Caco-2 (cell line): ENCODE measurements at regions of chr2 and their contacts with region 1.

Region 1: DNA sequence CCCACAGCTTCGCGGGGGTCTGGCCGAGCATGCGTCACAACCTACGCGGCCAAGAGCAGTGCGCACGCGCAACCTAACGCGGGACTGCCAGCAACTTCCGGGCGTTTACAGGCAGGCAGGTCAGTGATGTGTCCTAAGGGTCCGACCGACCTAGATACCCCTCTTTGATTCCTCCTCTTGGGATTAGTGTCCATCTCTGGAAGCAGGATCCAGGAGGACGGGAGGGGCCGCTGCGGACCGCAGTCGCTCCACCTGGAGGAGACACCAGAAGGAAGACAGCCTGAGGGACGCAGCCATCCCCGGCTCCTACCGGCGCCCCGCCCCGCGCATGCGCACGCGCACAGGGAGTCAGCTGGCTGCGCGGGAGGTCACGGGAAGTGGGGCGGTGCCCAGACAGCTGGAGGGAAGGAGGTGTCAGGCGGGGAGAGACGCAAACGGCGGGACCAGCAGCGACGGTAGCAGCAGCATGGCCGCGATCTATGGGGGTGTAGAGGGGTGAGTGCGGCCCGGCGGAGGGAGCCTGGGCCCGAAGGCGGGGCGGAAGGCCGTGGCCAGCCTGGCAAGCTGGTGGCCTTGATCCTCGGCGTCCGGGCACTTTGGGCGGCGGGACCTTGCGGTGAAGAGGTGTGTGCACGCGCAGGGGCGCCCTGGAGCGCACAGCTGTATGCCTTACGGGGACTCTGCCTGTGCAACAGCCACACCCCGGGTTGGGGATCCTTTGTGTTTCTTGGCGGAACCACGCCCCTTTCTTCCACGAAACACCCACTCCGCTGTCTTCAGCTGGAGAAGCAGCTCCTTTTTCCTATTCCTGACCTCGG is at the start of gene NAGK:
- DNase-seq: peak; percentile 96 to 98
- H3K4me3 ChIP-seq: peak within 1 kb of the TSS; percentile 71
- H3K4me3 Mint-ChIP-seq: peak within 1 kb of the TSS; percentile 76
- H3K27ac Mint-ChIP-seq: peak within 1 kb of the TSS; percentile 51
- H3K4me1 ChIP-seq: 0 out of 2 replicates have a peak, but pooled peaks cover 4% of the 10 kb centered on the region
- H3K4me1 Mint-ChIP-seq: peaks cover 10% of the 10 kb centered on the region
- H3K27me3 ChIP-seq: no peaks in the 10 kb centered on the region
- H3K27me3 Mint-ChIP-seq: no peaks in the 10 kb centered on the region
- CTCF ChIP-seq: no peak
- total RNA-seq, gene NAGK: 87.6 and 101 TPM in 2 replicates

Region 2: DNA sequence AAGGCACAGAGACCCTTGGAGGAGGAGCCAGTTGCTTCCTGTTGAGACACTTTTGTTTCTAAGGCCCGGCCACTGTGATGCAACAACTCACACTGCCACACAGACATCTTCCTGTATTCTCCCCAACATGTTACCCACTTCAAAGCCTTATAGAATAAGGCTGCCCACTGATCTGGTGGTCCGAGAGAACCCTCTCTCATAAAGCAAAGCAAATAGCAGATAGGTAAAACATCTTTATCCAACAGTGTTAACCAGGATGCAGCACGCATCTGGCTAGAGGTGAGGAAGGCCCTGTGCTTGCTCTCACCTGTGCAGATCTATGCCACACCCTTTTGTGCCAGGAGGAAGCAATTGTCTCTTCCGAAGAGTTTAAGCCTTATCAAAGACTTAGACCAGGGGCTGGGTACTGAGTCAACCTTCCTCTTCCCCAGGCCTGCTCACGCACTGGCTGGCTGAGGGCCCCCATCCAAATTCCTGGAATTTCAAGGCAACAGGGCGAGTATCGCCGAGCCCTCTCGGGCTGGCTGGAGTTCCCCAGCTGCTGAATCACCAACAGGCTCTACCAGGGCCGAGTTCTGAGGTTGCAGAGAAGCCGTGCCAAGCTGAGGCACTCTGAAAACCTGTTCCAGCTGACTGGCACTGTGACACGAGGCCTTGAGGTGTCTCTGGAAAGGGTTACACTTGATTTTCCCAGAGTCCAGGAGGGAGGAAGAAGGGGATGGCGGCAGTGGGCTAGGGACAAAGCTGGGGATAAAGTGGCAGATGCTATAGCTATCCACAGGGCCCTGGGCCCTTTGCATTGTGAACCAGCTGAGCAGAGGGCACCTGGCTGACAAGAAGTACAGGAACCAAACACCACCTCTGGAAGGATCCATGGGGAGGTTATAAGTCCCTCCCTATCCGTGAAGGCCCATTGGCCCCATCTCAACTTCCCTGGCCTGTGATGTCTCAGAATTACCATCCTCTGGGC is 544.1 kb before region 1 on chr2:
- CTCF ChIA-PET with region 1: no interaction called
- POLR2A ChIA-PET with region 1: interaction called, 12 read pairs
- intact Hi-C with region 1: no loop called
- DNase-seq: no peak
- H3K4me3 ChIP-seq: no peak overlapping the region
- H3K4me3 Mint-ChIP-seq: no peak overlapping the region
- H3K27ac Mint-ChIP-seq: no peak overlapping the region
- H3K4me1 ChIP-seq: no peaks in the 10 kb centered on the region
- H3K4me1 Mint-ChIP-seq: peaks cover 5% of the 10 kb centered on the region
- H3K27me3 ChIP-seq: no peaks in the 10 kb centered on the region
- H3K27me3 Mint-ChIP-seq: no peaks in the 10 kb centered on the region
- CTCF ChIP-seq: no peak

Region 3: DNA sequence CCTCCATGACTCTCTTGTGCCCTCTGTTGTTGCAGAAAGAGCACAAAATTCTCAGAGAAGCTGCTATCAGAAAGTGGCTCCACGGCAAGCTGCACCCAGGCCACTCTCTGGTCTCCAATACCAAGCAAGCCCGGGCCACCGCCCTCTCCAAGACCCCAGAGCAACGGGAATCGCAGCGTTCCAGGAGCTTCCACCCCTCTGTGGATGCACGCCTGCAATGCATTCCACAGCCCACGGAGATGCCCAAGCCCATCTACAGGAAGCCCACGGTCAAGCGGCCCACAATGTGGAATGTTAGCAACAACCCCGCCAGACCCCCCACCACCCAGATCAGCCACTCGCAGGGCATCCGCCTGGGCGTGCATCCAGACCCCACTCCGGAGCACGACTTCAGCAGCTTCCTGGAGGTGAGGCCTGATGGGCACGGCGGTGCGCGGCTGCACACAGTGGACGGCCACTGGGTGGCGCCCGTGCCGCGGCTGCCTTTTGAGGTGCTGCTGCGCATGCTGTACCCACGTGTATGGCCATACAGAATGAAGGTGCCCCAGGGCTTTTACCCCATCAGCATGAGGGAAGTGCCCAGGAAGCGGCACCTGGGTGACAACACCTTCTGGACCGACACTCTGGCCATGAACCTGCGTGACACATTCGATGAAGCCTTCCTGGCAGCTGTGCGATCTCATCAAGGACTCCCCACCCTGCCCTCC is 83.7 kb before region 1 on chr2:
- CTCF ChIA-PET with region 1: no interaction called
- POLR2A ChIA-PET with region 1: no interaction called
- intact Hi-C with region 1: no loop called
- DNase-seq: peak; percentile 33 to 44
- H3K4me3 ChIP-seq: no peak overlapping the region
- H3K4me3 Mint-ChIP-seq: no peak overlapping the region
- H3K27ac Mint-ChIP-seq: no peak overlapping the region
- H3K4me1 ChIP-seq: no peaks in the 10 kb centered on the region
- H3K4me1 Mint-ChIP-seq: no peaks in the 10 kb centered on the region
- H3K27me3 ChIP-seq: no peaks in the 10 kb centered on the region
- H3K27me3 Mint-ChIP-seq: no peaks in the 10 kb centered on the region
- CTCF ChIP-seq: peak; percentile 21 to 36

Region 4: DNA sequence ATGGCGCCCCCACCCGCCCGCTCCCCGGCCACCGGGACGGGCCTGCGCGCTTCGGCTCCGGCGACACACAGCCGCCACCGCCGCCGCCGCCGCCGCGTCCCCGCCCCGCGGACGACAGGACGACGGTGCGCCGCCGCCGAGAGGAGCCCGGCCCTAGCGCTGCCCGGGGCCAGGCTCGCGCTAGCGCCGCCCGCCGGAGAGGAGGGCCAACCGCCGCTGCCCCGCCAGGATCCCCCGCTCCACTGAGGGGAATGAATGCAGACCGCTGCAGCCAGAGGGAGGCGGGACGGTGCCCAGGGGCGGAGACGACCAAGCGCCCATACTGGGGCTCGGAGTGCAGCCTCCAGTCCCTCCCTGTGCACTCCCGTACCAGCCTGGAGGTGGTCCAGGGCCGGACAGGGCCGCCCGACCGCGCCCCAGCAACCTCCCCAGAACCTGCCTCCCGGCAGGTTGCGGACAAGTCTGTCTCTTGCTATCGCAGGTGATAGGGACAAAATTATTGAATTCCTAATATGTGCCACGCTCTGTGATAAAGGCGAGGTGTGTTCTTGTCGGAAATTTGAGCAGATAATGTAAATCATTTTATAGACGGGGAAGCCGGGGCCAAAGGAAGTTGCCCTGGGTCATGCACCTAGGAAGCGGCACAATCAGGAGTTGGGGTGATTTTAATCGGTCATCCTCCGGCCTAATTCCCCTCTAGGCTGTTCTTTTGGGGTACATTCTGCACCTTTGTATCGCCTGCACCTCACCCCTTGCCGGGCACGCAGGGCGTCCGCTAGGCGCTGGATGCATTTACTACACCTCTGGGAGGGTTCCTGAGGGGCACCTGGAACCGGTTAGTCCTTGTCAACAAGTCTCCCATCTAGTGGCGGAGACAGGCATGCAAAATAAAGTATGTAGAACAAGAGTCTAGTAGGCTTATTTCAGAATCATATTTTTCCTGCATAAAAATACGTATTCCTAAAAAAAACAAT is 73.4 kb before region 1 on chr2 and contains the start of gene TEX261:
- CTCF ChIA-PET with region 1: interaction called, 5 read pairs
- POLR2A ChIA-PET with region 1: no interaction called
- intact Hi-C with region 1: loop called (anchors 2 kb)
- DNase-seq: peak; percentile 90 to 97
- H3K4me3 ChIP-seq: peak within 1 kb of the TSS; percentile 73
- H3K4me3 Mint-ChIP-seq: peak within 1 kb of the TSS; percentile 93
- H3K27ac Mint-ChIP-seq: peak within 1 kb of the TSS; percentile 61
- H3K4me1 ChIP-seq: peaks cover 19% of the 10 kb centered on the region
- H3K4me1 Mint-ChIP-seq: no peaks in the 10 kb centered on the region
- H3K27me3 ChIP-seq: no peaks in the 10 kb centered on the region
- H3K27me3 Mint-ChIP-seq: no peaks in the 10 kb centered on the region
- CTCF ChIP-seq: peak; percentile 45 to 77
- total RNA-seq, gene TEX261: 64.1 and 70.0 TPM in 2 replicates

Region 5: DNA sequence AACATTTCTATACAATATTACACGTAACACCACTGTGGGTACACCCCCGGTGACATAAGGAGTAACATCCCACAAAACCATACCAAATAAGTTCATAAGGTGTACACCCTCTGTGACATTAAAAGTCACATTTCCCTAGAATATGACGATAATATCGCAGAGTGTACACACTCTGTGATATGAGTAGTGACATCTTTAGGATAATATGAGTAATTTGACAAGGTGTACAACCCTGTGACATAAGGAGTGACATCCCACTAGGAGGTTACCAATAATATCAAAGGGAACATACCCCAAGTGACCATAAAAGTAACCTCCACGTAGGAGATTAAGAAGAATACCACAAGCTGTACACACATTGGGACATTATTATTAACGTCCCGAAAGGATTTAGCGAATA is 49.8 kb before region 1 on chr2:
- CTCF ChIA-PET with region 1: interaction called, 18 read pairs
- POLR2A ChIA-PET with region 1: no interaction called
- intact Hi-C with region 1: loop called (anchors 1 kb)
- DNase-seq: no peak
- H3K4me3 ChIP-seq: no peak overlapping the region
- H3K4me3 Mint-ChIP-seq: no peak overlapping the region
- H3K27ac Mint-ChIP-seq: no peak overlapping the region
- H3K4me1 ChIP-seq: 0 out of 2 replicates have a peak, but pooled peaks cover 4% of the 10 kb centered on the region
- H3K4me1 Mint-ChIP-seq: peaks cover 8% of the 10 kb centered on the region
- H3K27me3 ChIP-seq: no peaks in the 10 kb centered on the region
- H3K27me3 Mint-ChIP-seq: no peaks in the 10 kb centered on the region
- CTCF ChIP-seq: no peak

Region 6: DNA sequence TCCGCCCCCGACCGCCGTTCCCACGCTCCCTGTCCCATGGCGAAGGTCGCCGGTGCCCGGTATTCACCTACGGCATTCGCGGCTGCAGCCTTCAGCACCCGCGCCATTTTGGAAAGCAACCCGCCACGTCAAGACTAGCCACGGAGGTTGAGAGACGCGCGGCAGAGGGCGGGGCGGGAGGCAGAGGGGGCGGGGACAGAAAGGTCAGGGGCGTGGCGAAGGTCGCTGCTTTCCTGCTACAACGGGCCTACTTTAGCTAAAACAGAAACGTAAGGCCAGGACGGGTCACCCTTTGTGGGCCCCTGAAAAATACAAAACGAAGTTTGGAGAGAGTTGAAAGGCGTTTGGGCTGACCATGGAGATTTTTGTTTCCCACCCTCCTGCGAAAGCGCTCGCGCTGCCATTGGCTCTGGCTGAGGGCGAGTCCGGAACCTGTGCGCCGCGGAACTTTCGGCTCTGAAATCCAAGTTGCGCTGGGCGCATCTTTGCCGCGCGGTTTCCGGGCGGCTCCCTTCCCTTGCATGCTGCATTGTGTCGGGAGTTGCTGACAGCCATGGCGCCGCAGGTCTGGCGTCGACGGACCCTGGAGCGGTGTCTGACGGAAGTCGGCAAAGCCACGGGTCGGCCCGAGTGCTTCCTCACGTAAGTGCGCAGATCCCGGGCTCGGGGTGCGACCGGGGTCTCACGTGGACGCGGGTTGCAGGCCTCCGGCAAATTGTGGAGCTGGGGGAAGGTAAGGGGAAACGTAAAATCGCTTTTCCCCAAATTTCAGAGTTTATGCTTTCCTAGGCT is 61.9 kb after region 1 on chr2 and contains the starts of genes MCEE and MPHOSPH10:
- CTCF ChIA-PET with region 1: no interaction called
- POLR2A ChIA-PET with region 1: interaction called, 12 read pairs
- intact Hi-C with region 1: loop called (anchors 1 kb)
- DNase-seq: peak; percentile 93
- H3K4me3 ChIP-seq: peak within 1 kb of the TSS; percentile 73
- H3K4me3 Mint-ChIP-seq: no peak within 1 kb of the TSS
- H3K27ac Mint-ChIP-seq: no peak within 1 kb of the TSS
- H3K4me1 ChIP-seq: 0 out of 2 replicates have a peak, but pooled peaks cover 4% of the 10 kb centered on the region
- H3K4me1 Mint-ChIP-seq: no peaks in the 10 kb centered on the region
- H3K27me3 ChIP-seq: no peaks in the 10 kb centered on the region
- H3K27me3 Mint-ChIP-seq: no peaks in the 10 kb centered on the region
- CTCF ChIP-seq: no peak
- total RNA-seq, gene MCEE: 13.7 and 15.6 TPM in 2 replicates
- total RNA-seq, gene MPHOSPH10: 53.2 and 57.8 TPM in 2 replicates

Region 7: DNA sequence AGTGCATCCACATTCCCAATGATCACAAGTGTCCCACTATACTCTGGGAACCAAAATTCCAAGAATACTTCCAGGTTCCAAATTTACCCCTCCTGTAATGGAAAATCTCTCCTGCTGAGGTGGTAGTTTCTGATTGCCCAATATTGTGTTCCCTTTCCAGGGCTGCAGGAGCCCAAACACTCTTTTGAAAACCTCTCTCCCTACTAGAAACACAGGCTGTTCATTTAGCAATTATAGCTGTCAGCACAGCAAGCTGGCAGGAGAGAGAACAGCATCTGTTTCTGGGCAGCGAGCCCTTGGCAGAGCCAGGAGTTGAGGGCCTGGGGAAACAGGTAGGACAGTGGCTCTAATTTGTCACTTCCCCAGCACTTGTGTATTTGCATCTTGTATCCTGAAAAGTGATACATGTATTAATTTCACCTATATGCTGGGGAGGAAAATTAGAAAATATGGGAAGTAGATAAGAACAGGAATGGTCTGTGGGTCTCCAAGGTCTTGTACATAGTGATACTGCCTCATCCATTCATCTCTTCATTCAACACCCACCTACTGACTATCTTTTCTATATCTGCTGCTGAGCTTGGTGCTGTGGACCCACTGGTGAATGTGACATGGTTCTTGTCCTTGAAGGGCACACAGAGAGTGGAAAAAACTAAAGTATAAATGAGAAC is 175.3 kb after region 1 on chr2:
- CTCF ChIA-PET with region 1: no interaction called
- POLR2A ChIA-PET with region 1: interaction called, 10 read pairs
- intact Hi-C with region 1: no loop called
- DNase-seq: no peak
- H3K4me3 ChIP-seq: no peak overlapping the region
- H3K4me3 Mint-ChIP-seq: peak overlapping the region; percentile 25
- H3K27ac Mint-ChIP-seq: peak overlapping the region; percentile 73
- H3K4me1 ChIP-seq: peaks cover 20% of the 10 kb centered on the region
- H3K4me1 Mint-ChIP-seq: peaks cover 22% of the 10 kb centered on the region
- H3K27me3 ChIP-seq: no peaks in the 10 kb centered on the region
- H3K27me3 Mint-ChIP-seq: no peaks in the 10 kb centered on the region
- CTCF ChIP-seq: no peak

Region 8: GRCh38 chr2:71578767-71579342 is 510.4 kb after region 1 on chr2:
- CTCF ChIA-PET with region 1: no interaction called
- POLR2A ChIA-PET with region 1: no interaction called
- intact Hi-C with region 1: no loop called
- DNase-seq: no peak
- H3K4me3 ChIP-seq: no peak overlapping the region
- H3K4me3 Mint-ChIP-seq: no peak overlapping the region
- H3K27ac Mint-ChIP-seq: no peak overlapping the region
- H3K4me1 ChIP-seq: no peaks in the 10 kb centered on the region
- H3K4me1 Mint-ChIP-seq: no peaks in the 10 kb centered on the region
- H3K27me3 ChIP-seq: no peaks in the 10 kb centered on the region
- H3K27me3 Mint-ChIP-seq: no peaks in the 10 kb centered on the region
- CTCF ChIP-seq: no peak